OCI-LY7 (cell line): ENCODE measurements at regions of chr2 and their contacts with region 1.

Region 1: GRCh38 chr2:47724221-47724981 is 58.5 kb upstream of the MSH6 start:
- DNase-seq: peak; percentile 99
- H3K4me3 ChIP-seq: peak overlapping the region; percentile 28
- H3K27ac ChIP-seq: peak overlapping the region; percentile 100
- H3K4me1 ChIP-seq: peaks cover 96% of the 10 kb centered on the region
- CTCF ChIP-seq: no peak

Region 2: DNA sequence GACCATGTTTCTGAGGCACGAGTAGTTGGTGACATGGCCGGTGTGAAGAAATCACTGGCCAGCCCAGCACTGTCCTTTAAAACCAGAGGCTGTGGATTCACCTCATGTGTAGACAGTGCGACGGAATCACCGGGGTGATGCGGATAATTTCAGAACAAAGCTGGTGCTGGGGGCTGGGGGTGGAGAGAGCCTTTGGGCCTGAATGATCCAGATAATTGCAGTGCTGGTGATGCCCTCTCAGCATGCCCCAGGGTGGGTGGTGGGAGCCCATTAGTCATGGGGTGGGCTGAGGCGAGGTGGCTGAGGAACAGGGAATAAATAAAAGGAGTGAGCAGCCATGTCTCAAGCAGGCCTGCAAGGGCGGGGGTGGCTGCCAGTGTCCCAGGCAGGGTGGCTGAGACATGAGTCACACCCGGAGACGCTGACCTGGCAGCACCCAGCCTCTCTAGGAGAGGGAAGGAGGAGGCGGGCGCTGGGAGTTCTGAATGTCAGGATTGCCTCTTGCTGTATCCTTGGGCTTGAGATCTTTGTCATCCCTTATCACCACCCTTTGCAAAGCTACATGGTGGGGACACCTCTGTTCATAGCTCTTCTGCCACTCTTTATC is 92.5 kb before region 1 on chr2:
- CTCF ChIA-PET with region 1: no interaction called
- POLR2A ChIA-PET with region 1: no interaction called
- intact Hi-C with region 1: no loop called
- DNase-seq: no peak
- H3K4me3 ChIP-seq: no peak overlapping the region
- H3K27ac ChIP-seq: no peak overlapping the region
- H3K4me1 ChIP-seq: peaks cover 7% of the 10 kb centered on the region
- CTCF ChIP-seq: no peak

Region 3: DNA sequence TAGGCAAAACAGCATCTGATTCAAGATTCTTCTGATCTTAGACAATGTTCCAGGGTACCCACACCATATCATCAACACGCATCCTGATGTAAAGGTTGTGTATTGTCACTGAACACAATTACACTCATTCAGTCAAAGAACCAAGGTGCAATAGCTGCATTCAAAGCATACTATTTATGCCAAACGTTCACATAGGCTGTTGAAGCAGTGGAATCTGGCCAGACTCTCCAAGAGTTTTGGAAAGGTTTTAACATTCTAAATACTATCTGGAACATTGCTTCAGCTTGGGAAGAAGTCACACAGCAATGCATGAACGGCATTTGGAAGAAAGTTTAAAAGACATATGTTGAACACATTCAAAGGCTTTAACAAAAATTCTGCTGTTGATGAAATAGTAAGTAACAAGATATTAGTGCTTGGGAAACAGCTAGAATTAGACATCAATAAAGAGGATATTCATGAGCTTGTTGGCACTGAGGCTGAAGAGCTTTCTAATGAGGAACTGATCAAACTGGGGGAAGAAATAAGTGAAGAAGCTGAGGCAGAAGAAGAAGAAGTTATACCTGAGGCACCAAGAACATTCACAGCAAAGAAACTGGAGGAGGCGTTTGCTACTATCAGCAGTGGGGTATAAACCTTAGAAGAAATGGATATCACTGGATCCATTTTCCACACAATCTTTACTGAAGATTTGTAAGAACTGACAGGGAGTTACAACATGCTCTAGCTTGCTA is 10.9 kb after region 1 on chr2:
- CTCF ChIA-PET with region 1: interaction called, 9 read pairs
- POLR2A ChIA-PET with region 1: interaction called, 78 read pairs
- intact Hi-C with region 1: loop called (anchors 1 kb)
- DNase-seq: no peak
- H3K4me3 ChIP-seq: peak overlapping the region; percentile 28
- H3K27ac ChIP-seq: peak overlapping the region; percentile 94
- H3K4me1 ChIP-seq: peaks cover 82% of the 10 kb centered on the region
- CTCF ChIP-seq: 0 out of 2 replicates have a peak, but pooled peaks have one; percentile 5

Region 4: GRCh38 chr2:47741094-47741493 is 16.7 kb after region 1 on chr2:
- CTCF ChIA-PET with region 1: interaction called, 9 read pairs
- POLR2A ChIA-PET with region 1: interaction called, 78 read pairs
- intact Hi-C with region 1: loop called (anchors 1 kb)
- DNase-seq: no peak
- H3K4me3 ChIP-seq: no peak overlapping the region
- H3K27ac ChIP-seq: peak overlapping the region; percentile 32
- H3K4me1 ChIP-seq: peaks cover 68% of the 10 kb centered on the region
- CTCF ChIP-seq: no peak

Region 5: GRCh38 chr2:47751875-47752357 is 27.5 kb after region 1 on chr2:
- CTCF ChIA-PET with region 1: no interaction called
- POLR2A ChIA-PET with region 1: interaction called, 20 read pairs
- intact Hi-C with region 1: loop called (anchors 1 kb)
- DNase-seq: no peak
- H3K4me3 ChIP-seq: no peak overlapping the region
- H3K27ac ChIP-seq: peak overlapping the region; percentile 79
- H3K4me1 ChIP-seq: peaks cover 67% of the 10 kb centered on the region
- CTCF ChIP-seq: no peak